ENCODE measurements at regions of chr11 and their contacts with region 1.

Region 1: DNA sequence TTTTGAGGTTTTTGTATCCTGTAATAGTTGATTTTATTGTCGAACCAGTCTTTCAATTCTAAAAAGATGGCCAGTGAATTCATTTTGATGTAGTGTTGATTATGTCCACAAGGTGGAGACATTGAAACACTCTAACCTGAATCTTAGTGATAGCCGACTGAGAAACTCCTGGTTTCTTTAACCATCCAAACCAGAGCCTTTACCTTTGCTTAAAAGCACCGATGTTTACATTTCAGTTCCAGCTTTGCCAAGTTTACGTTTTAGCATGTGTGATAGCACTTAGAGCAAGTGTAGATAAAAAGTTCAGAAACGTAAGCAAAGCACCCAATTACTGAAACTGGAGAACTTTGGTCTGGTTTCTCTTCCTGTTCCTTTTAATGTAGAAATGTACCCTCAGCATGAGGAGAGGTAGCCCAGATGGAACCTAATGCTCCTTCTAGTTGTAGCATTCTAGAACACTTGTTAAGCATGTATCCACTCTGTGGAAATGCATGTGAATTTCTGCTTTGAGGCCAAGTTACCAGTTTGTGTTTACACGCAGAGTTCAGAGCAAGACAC is 208.6 kb downstream of the DBX1 start:
- H3K4me3 Mint-ChIP-seq: peak overlapping the region; percentile 70
- H3K27ac Mint-ChIP-seq: no peak overlapping the region
- H3K4me1 Mint-ChIP-seq: peaks cover 3% of the 10 kb centered on the region
- H3K27me3 Mint-ChIP-seq: peaks cover 5% of the 10 kb centered on the region

Region 2: DNA sequence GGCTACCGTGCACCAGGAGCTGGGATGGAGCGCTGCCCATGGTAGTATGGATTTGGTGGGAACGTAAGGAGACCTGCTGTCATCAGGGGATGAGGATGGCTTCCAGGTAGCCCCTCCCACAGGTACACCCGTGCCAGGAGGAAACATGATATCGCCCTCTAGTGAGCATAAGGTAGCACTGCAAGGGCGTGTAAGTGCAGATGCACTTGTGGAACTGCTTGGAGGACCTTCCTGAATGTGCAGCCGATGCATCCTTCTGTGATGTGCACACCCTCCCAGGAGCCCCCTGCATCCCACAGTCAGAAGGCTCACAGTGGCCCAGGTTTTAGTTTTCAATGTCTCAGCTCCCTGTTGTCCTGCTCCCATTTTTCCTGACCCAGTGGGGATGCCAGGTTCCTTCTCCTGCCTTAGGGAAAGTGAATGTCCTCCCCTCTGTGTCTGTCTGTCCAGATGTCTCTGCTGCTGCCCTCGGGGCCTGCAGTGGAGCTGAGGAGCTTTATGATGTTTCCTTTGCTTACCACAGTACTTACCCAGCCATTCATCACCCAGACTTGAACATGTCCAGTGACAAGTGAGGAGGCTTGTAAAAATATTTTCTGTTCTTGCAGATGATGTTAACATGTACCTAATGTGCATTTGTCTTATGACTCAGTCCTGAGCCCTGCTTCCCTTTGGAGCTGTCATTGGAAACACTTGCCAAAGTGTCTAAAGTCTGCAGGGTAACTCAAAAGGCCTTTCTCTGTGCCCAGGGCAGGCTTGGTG is 159.5 kb after region 1 on chr11:
- intact Hi-C with region 1: loop called (anchors 5 kb)
- H3K4me3 Mint-ChIP-seq: no peak overlapping the region
- H3K27ac Mint-ChIP-seq: no peak overlapping the region
- H3K4me1 Mint-ChIP-seq: peaks cover 12% of the 10 kb centered on the region
- H3K27me3 Mint-ChIP-seq: no peaks in the 10 kb centered on the region

Region 3: GRCh38 chr11:20355221-20356219 is 403.9 kb after region 1 on chr11:
- intact Hi-C with region 1: loop called (anchors 10 kb)
- H3K4me3 Mint-ChIP-seq: no peak overlapping the region
- H3K27ac Mint-ChIP-seq: no peak overlapping the region
- H3K4me1 Mint-ChIP-seq: peaks cover 2% of the 10 kb centered on the region
- H3K27me3 Mint-ChIP-seq: peaks cover 30% of the 10 kb centered on the region